CD4-positive, alpha-beta memory T cell (primary cell): ENCODE measurements at regions of chr1 and their contacts with region 1.

Region 1: DNA sequence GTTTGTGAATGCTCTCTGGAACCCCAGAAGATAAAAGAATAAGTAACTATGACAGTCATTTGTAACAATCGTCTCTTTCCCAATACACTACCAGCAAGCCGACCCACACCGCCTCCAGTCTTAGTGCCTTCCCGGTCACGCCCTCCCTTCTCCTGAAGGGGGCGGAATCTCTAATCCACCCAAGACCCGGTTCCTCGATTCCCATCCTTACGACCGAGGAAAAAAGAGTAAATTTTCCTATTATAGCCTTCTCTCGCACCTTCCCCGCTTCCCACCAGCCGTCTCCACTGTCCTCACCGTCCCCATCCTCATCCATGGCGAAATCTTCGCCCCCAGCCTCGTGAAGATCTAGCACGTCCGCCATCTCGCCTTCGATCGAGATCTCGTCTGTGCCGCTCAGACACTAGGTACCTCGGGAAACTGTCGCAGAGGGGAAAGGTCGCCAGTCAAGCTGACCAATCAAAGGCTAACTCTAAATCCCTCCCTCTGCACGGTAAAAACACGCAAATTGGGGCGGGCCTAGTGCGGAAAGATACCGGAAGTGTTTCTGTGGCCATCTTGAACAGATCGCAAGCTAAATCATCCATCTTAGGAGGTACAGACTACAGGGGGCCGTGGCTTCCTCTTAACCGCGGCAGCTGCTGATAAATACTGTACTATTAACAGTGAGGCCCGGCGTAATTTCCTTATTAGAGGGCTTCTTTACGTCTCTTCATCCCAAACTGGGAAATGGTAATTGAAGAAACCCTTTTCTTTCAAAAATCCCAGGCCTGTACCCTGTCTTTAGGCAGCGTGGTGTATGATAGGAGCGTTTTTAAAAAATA is at the start of gene RBM8A:
- DNase-seq: peak; percentile 94 to 98 (median 97)
- H3K4me3 ChIP-seq: peak within 1 kb of the TSS; percentile 96 to 99
- H3K4me3 Mint-ChIP-seq: peak within 1 kb of the TSS in 5 of 8 donors; percentile 20 to 69 (median 42)
- H3K27ac ChIP-seq: peak within 1 kb of the TSS; percentile 96
- H3K27ac Mint-ChIP-seq: peak within 1 kb of the TSS in 4 of 7 donors; percentile 72 to 94 (median 82)
- H3K4me1 ChIP-seq: peaks cover 29% of the 10 kb centered on the region
- H3K4me1 Mint-ChIP-seq: peaks cover 10 to 25% (median 17%) of the 10 kb centered on the region in 4 donors
- H3K27me3 ChIP-seq: no peaks in the 10 kb centered on the region
- H3K27me3 Mint-ChIP-seq: no peaks in the 10 kb centered on the region
- total RNA-seq, gene RBM8A: 116 to 122 TPM

Region 2: DNA sequence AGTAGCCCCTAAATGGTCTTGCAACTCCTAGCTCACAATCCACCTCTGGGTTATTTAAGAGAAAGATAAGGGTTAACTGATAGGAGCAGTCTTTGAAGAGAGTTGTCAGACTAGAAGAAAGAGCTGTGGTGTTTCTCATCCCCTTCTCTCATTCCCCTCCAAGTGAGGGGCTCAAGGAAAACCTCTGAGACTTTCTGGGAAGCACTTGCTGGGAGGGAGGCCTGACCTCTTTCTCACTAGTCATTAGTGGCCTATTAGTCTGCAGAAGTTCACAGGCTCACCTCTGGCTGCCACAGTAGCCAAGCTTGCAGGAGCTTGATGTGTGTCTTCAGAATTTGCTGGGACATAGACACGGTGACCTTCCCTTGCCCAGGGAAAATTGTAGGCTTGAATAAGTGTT is 325.7 kb before region 1 on chr1:
- CTCF ChIA-PET with region 1: no interaction called
- POLR2A ChIA-PET with region 1: no interaction called
- intact Hi-C with region 1: no loop called
- DNase-seq: no peak
- H3K4me3 ChIP-seq: no peak overlapping the region
- H3K4me3 Mint-ChIP-seq: no peak overlapping the region
- H3K27ac ChIP-seq: no peak overlapping the region
- H3K27ac Mint-ChIP-seq: no peak overlapping the region
- H3K4me1 ChIP-seq: no peaks in the 10 kb centered on the region
- H3K4me1 Mint-ChIP-seq: no peaks in the 10 kb centered on the region
- H3K27me3 ChIP-seq: no peaks in the 10 kb centered on the region
- H3K27me3 Mint-ChIP-seq: peaks cover 0 to 6% of the 10 kb centered on the region in 2 donors

Region 3: GRCh38 chr1:145823565-145824498 is 103.4 kb before region 1 on chr1 and contains the starts of genes POLR3C and RNF115:
- CTCF ChIA-PET with region 1: no interaction called
- POLR2A ChIA-PET with region 1: interaction called, 15 read pairs
- intact Hi-C with region 1: no loop called
- DNase-seq: peak; percentile 84 to 92 (median 86)
- H3K4me3 ChIP-seq: peak within 1 kb of the TSS; percentile 93 to 100
- H3K4me3 Mint-ChIP-seq: peak within 1 kb of the TSS; percentile 97 to 99 (median 98)
- H3K27ac ChIP-seq: peak within 1 kb of the TSS; percentile 78
- H3K27ac Mint-ChIP-seq: peak within 1 kb of the TSS; percentile 90 to 99 (median 97)
- H3K4me1 ChIP-seq: peaks cover 23% of the 10 kb centered on the region
- H3K4me1 Mint-ChIP-seq: peaks cover 17 to 35% (median 24%) of the 10 kb centered on the region in 4 donors
- H3K27me3 ChIP-seq: no peaks in the 10 kb centered on the region
- H3K27me3 Mint-ChIP-seq: no peaks in the 10 kb centered on the region
- total RNA-seq, gene POLR3C: 43.5 to 44.8 TPM
- total RNA-seq, gene RNF115: 15.2 to 15.3 TPM

Region 4: DNA sequence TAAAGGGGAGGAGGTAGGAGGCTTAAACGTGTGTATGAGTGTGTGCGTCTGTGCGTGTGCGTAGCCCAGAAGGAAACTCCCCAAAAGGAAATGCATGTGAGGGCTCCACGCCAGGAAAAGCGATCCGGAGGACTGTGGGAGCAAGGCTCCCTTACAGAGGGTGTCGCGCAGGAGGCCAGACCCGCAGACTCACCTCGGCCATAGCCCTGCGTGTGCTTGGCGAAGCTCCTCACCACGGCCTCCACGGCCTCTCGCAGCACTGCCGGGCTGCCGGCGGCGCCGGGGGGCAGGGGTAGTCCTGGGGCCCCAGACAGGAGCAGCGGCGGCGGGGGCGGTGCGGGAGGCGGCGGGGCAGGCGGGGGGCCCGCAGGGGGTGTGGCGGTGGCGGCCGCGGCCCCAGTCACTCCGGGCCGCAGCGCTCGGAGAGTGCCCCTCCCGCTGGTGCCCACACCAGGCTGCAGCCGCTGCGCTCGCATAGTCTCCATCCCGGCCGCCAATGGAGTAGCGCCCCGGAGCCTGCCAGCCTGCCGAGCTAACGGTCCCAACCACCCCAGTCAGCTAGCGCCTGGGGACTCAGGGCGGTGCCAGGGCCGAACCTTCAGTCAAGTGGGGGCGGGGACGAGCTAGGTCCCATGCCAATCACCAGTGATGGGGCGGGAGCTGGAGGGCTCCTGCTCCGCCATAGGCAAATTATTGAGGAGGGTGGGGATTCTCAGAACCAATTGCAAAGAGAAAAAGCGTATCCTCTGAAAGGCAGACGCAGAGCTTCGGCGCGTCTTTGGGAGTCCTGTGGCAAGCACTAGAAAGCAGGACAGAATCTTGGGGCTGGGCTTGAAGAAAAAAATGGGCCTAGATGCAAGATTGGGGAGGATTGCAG is 30.4 kb after region 1 on chr1 and contains the start of gene LIX1L:
- CTCF ChIA-PET with region 1: interaction called, 30 read pairs
- POLR2A ChIA-PET with region 1: interaction called, 444 read pairs
- intact Hi-C with region 1: loop called (anchors 1 kb)
- DNase-seq: peak; percentile 92 to 98 (median 94)
- H3K4me3 ChIP-seq: peak within 1 kb of the TSS; percentile 31 to 63
- H3K4me3 Mint-ChIP-seq: peak within 1 kb of the TSS; percentile 89 to 99 (median 96)
- H3K27ac ChIP-seq: peak within 1 kb of the TSS; percentile 81
- H3K27ac Mint-ChIP-seq: peak within 1 kb of the TSS; percentile 89 to 99 (median 97)
- H3K4me1 ChIP-seq: peaks cover 65% of the 10 kb centered on the region
- H3K4me1 Mint-ChIP-seq: peaks cover 55 to 88% (median 65%) of the 10 kb centered on the region in 4 donors
- H3K27me3 ChIP-seq: no peaks in the 10 kb centered on the region
- H3K27me3 Mint-ChIP-seq: no peaks in the 10 kb centered on the region
- total RNA-seq, gene LIX1L: 64.5 to 66.1 TPM

Region 5: GRCh38 chr1:145996433-145997015 is 69.2 kb after region 1 on chr1 and contains the start of gene TXNIP:
- CTCF ChIA-PET with region 1: interaction called, 5 read pairs
- POLR2A ChIA-PET with region 1: interaction called, 38 read pairs
- intact Hi-C with region 1: no loop called
- DNase-seq: peak; percentile 90 to 96 (median 94)
- H3K4me3 ChIP-seq: peak within 1 kb of the TSS; percentile 97 to 99
- H3K4me3 Mint-ChIP-seq: peak within 1 kb of the TSS; percentile 96 to 99 (median 98)
- H3K27ac ChIP-seq: peak within 1 kb of the TSS; percentile 75
- H3K27ac Mint-ChIP-seq: peak within 1 kb of the TSS; percentile 96 to 99 (median 97)
- H3K4me1 ChIP-seq: peaks cover 62% of the 10 kb centered on the region
- H3K4me1 Mint-ChIP-seq: peaks cover 39 to 89% (median 50%) of the 10 kb centered on the region in 4 donors
- H3K27me3 ChIP-seq: no peaks in the 10 kb centered on the region
- H3K27me3 Mint-ChIP-seq: no peaks in the 10 kb centered on the region
- total RNA-seq, gene TXNIP: 933 to 985 TPM

Region 6: DNA sequence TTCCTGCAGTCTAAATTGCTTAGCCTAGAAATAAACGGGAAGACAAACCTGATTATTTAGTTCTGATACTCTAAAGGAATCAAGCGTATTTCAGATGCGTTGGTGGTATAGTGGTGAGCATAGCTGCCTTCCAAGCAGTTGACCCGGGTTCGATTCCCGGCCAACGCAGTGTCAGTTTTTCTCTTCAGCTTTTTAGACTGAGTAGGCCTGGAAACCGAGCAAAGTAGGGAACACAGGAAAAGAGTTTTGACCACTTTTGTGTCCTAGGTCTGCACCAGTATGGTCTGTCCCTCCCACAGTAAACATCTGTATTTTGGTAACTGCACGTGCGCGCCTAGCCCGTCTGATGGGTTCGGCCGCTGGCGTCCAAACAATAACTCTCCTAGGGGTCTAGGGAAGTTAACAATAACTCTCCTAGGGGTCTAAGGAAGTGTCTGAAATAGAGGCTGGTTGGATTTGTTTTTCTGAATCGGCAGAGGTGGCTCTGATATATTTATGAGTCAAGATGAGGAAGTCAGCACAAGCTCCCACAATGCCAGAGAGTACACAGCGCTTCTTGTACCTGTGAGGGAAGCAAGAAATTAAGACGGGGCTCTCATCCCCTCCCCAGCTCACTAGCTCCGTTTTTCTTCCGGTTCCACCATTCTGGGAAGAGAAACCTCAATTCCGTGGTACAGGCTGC is 109.8 kb after region 1 on chr1:
- CTCF ChIA-PET with region 1: interaction called, 4 read pairs
- POLR2A ChIA-PET with region 1: interaction called, 24 read pairs
- intact Hi-C with region 1: loop called (anchors 1 kb)
- DNase-seq: peak; percentile 82 to 85 (median 84)
- H3K4me3 ChIP-seq: peak overlapping the region; percentile 65 to 77
- H3K4me3 Mint-ChIP-seq: peak overlapping the region; percentile 93 to 99 (median 97)
- H3K27ac ChIP-seq: peak overlapping the region; percentile 62
- H3K27ac Mint-ChIP-seq: peak overlapping the region; percentile 94 to 100 (median 97)
- H3K4me1 ChIP-seq: peaks cover 25% of the 10 kb centered on the region
- H3K4me1 Mint-ChIP-seq: peaks cover 16 to 56% (median 29%) of the 10 kb centered on the region in 4 donors
- H3K27me3 ChIP-seq: no peaks in the 10 kb centered on the region
- H3K27me3 Mint-ChIP-seq: peaks cover 2 to 27% of the 10 kb centered on the region in 2 donors

Region 7: DNA sequence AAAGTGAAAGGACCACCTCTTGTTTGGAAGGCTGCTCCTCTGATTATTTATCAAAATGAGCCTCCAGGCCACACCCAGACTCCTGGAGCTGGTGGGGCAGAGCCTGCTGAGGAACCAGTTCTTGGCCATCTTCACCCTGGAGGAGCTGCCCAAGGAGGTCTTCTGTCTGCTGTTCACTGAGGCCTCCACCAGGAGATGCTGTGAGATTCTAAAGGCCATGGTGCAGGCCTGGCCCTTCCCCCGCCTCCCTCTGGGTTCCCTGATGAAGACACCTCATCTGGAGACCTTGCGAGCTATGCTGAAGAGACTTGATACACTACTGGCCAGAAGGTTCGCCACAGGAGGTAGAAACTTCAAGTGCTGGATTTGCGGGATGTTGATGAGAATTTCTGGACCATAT is 1913.6 kb after region 1 on chr1:
- CTCF ChIA-PET with region 1: no interaction called
- POLR2A ChIA-PET with region 1: no interaction called
- intact Hi-C with region 1: no loop called
- DNase-seq: no peak
- H3K4me3 ChIP-seq: no peak overlapping the region
- H3K4me3 Mint-ChIP-seq: no peak overlapping the region
- H3K27ac ChIP-seq: no peak overlapping the region
- H3K27ac Mint-ChIP-seq: no peak overlapping the region
- H3K4me1 ChIP-seq: no peaks in the 10 kb centered on the region
- H3K4me1 Mint-ChIP-seq: peaks cover 0 to 1% (median 0%) of the 10 kb centered on the region in 4 donors
- H3K27me3 ChIP-seq: no peaks in the 10 kb centered on the region
- H3K27me3 Mint-ChIP-seq: peaks cover 4 to 16% of the 10 kb centered on the region in 2 donors